ENCODE measurements at regions of chr5 and their contacts with region 1.

Region 1: DNA sequence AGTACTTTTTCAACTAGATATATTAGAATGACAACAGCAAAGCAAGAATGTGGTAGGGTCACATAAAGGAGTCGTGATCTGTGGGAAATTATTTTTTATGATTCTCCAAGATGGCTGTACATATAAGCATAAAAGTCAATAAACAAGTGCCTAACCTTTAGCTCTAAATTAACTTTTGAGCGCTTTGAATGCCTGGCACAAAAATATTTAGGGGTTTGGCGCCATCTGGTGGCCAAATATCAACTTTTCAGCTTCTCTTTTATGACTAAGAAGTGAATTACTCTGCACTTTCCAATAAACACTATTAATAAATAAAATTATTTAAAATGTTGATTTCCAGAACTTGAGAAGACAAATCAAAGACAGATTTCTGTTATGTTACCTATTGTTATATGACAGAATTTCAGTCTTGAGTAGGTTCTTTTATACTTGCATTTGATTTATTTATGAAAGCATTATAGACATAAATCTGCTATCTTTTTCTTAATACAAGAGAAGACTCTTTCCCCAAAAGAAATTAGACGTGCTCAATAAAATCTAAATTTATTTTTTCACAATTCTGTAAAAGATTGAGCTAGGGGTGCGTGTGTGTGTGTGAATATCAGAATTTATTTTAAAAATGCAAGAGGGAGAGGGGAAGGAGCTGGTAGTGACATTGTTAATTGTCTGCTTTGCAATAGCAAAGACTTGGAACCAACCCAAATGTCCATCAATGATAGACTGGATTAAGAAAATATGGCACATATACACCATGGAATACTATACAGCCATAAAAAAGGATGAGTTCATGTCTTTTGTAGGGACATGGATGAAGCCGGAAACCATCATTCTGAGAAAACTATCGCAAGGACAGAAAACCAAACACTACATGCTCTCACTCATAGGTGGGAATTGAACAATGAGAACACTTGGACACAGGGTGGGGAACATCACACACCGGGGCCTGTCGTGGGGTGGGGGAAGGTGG is 36.7 kb upstream of the ARRDC3 start:
- DNase-seq: peak; percentile 60
- ATAC-seq: no peak
- H3K4me3 Mint-ChIP-seq: no peak overlapping the region
- H3K27ac Mint-ChIP-seq: no peak overlapping the region
- H3K4me1 Mint-ChIP-seq: peaks cover 25% of the 10 kb centered on the region
- H3K27me3 Mint-ChIP-seq: no peaks in the 10 kb centered on the region
- CTCF ChIP-seq: peak; percentile 74

Region 2: GRCh38 chr5:90802474-90803317 is 617.2 kb before region 1 on chr5:
- CTCF ChIA-PET with region 1: interaction called, 15 read pairs
- POLR2A ChIA-PET with region 1: no interaction called
- DNase-seq: peak; percentile 41
- ATAC-seq: peak; percentile 94
- H3K4me3 Mint-ChIP-seq: no peak overlapping the region
- H3K27ac Mint-ChIP-seq: peak overlapping the region; percentile 91
- H3K4me1 Mint-ChIP-seq: 0 out of 2 replicates have a peak, but pooled peaks cover 3% of the 10 kb centered on the region
- H3K27me3 Mint-ChIP-seq: no peaks in the 10 kb centered on the region; the same call in none of the 2 replicates
- CTCF ChIP-seq: peak; percentile 43; the same call in 1 of the 2 replicates

Region 3: DNA sequence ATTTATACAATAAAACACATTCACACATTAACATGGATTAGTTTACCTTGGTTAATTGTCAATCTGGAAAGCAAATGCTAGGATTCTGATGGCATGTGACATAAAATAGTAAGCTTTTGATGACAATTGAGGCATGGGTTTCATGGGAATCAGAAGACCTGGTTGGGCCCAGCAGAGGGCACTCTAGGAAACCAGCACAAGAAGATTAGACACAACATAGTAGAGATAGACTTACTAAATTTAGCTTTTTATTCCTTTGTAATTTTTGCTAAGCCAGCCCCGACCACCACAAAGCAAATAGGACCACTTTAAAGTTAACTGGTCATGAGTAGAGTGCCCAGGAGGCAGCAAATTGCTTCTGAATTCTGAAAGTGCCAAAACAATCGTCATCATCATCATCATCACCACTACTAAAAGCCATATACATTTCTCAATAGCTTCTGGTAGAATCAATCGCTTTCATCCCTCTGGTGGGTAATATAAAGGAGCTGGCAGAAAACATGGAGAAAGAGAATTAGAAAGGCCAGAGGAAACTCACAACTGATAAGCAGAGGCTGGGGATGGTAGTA is 200.0 kb before region 1 on chr5:
- CTCF ChIA-PET with region 1: interaction called, 35 read pairs
- POLR2A ChIA-PET with region 1: no interaction called
- DNase-seq: no peak
- ATAC-seq: peak; percentile 77
- H3K4me3 Mint-ChIP-seq: no peak overlapping the region
- H3K27ac Mint-ChIP-seq: no peak overlapping the region
- H3K4me1 Mint-ChIP-seq: no peaks in the 10 kb centered on the region
- H3K27me3 Mint-ChIP-seq: no peaks in the 10 kb centered on the region
- CTCF ChIP-seq: 0 out of 2 replicates have a peak, but pooled peaks have one; percentile 15

Region 4: DNA sequence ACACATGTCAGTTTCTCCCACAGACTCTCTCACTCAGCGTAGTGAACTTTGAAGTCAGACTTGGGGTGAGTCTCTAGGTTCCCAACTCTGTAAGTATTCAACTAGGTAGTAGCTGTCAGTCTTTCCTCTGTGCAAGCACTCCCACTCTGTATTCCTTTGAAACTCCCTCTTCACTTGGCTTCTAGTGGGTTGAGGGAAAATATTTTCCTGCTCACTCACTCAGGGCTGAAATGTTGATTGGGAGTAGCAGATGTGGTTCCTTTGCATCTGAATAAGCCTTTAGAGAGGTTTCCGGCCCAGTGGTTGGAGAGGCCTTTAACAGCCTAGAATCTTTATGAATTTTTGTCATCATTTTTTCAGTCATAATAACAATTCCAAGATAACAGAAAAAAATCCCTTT is 18.7 kb before region 1 on chr5:
- CTCF ChIA-PET with region 1: interaction called, 11 read pairs
- POLR2A ChIA-PET with region 1: no interaction called
- DNase-seq: no peak
- ATAC-seq: peak; percentile 67
- H3K4me3 Mint-ChIP-seq: no peak overlapping the region
- H3K27ac Mint-ChIP-seq: peak overlapping the region; percentile 35
- H3K4me1 Mint-ChIP-seq: peaks cover 13% of the 10 kb centered on the region
- H3K27me3 Mint-ChIP-seq: no peaks in the 10 kb centered on the region
- CTCF ChIP-seq: no peak

Region 5: GRCh38 chr5:91434348-91434747 is 14.5 kb after region 1 on chr5:
- CTCF ChIA-PET with region 1: interaction called, 13 read pairs
- POLR2A ChIA-PET with region 1: no interaction called
- DNase-seq: no peak
- ATAC-seq: no peak
- H3K4me3 Mint-ChIP-seq: no peak overlapping the region
- H3K27ac Mint-ChIP-seq: no peak overlapping the region
- H3K4me1 Mint-ChIP-seq: peaks cover 19% of the 10 kb centered on the region
- H3K27me3 Mint-ChIP-seq: no peaks in the 10 kb centered on the region
- CTCF ChIP-seq: no peak

Measured in WTC11 (cell line).